Esophagus squamous epithelium (tissue), 5 donors: ENCODE measurements at regions of chr11 and their contacts with region 1.

Region 1: GRCh38 chr11:133082851-133083488 is 449.3 kb downstream of the OPCML start:
- DNase-seq: no peak
- H3K4me3 ChIP-seq: peak overlapping the region; percentile 29 to 70 (median 42)
- H3K27ac ChIP-seq: no peak overlapping the region
- H3K4me1 ChIP-seq: peaks cover 5 to 13% (median 6%) of the 10 kb centered on the region in 3 donors
- H3K27me3 ChIP-seq: peaks cover 0 to 75% (median 2%) of the 10 kb centered on the region in 4 donors
- CTCF ChIP-seq: peak; percentile 38 to 99 (median 97)
- POLR2A ChIP-seq: no peak

Region 2: GRCh38 chr11:133834682-133835592 is 752.0 kb after region 1 on chr11:
- intact Hi-C with region 1: loop called (anchors 5 kb)
- DNase-seq: no peak
- H3K4me3 ChIP-seq: no peak overlapping the region
- H3K27ac ChIP-seq: no peak overlapping the region
- H3K4me1 ChIP-seq: no peaks in the 10 kb centered on the region
- H3K27me3 ChIP-seq: peaks cover 0 to 27% (median 0%) of the 10 kb centered on the region in 4 donors
- CTCF ChIP-seq: peak; percentile 26 to 65 (median 54)
- POLR2A ChIP-seq: no peak